ENCODE measurements at regions of chr5 and their contacts with region 1.

Region 1: GRCh38 chr5:163564321-163564938 is 59.0 kb downstream of the MAT2B start:
- DNase-seq: peak; percentile 72
- H3K4me3 ChIP-seq: no peak overlapping the region
- H3K27ac ChIP-seq: no peak overlapping the region
- H3K4me1 ChIP-seq: peaks cover 24% of the 10 kb centered on the region
- H3K27me3 ChIP-seq: peaks cover 17% of the 10 kb centered on the region; the same call in 1 of the 2 replicates

Region 2: GRCh38 chr5:162664846-162665245 is 899.6 kb before region 1 on chr5:
- in situ Hi-C with region 1: no loop called
- DNase-seq: no peak
- H3K4me3 ChIP-seq: no peak overlapping the region
- H3K27ac ChIP-seq: no peak overlapping the region
- H3K4me1 ChIP-seq: no peaks in the 10 kb centered on the region
- H3K27me3 ChIP-seq: no peaks in the 10 kb centered on the region

Region 3: GRCh38 chr5:163135849-163136248 is 428.6 kb before region 1 on chr5:
- in situ Hi-C with region 1: no loop called
- DNase-seq: no peak
- H3K4me3 ChIP-seq: no peak overlapping the region
- H3K27ac ChIP-seq: no peak overlapping the region
- H3K4me1 ChIP-seq: no peaks in the 10 kb centered on the region
- H3K27me3 ChIP-seq: no peaks in the 10 kb centered on the region

Region 4: GRCh38 chr5:163915481-163915961 is 351.1 kb after region 1 on chr5:
- in situ Hi-C with region 1: no loop called
- DNase-seq: no peak
- H3K4me3 ChIP-seq: no peak overlapping the region
- H3K27ac ChIP-seq: no peak overlapping the region
- H3K4me1 ChIP-seq: no peaks in the 10 kb centered on the region
- H3K27me3 ChIP-seq: no peaks in the 10 kb centered on the region

Region 5: GRCh38 chr5:164013077-164013670 is 448.7 kb after region 1 on chr5:
- in situ Hi-C with region 1: loop called (anchors 25 kb)
- DNase-seq: peak; percentile 64
- H3K4me3 ChIP-seq: no peak overlapping the region
- H3K27ac ChIP-seq: no peak overlapping the region
- H3K4me1 ChIP-seq: no peaks in the 10 kb centered on the region
- H3K27me3 ChIP-seq: no peaks in the 10 kb centered on the region; the same call in 1 of the 2 replicates

Region 6: DNA sequence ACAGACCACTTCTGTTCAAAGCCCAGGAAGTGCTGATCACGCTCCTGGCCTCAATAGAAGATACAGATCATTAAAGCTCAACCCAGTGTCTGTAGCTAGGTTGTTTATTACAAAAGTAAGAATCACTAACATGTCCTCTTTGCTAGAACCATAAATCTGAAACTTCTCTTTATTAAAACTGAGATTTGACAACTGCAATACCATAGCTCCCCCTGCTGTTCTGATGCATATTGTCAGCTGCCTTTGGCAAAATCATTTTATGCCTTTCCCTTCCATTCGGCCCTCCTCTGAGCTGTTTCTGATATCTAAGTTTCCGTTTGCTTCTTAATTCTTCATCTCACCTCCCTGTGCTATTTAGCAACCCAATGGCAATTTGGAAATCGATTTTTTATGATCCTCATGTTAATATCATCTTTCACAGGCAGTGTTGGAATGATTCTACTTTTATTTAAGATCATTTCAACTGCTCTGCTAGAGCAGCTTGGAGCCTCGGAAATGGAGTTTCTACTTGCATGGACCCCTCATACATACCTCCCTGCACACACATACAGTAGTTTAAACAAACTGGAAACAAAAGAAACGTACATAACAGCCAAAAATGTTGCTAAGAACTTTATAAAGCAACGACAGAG is 939.8 kb after region 1 on chr5:
- in situ Hi-C with region 1: loop called (anchors 10 kb)
- DNase-seq: peak; percentile 62
- H3K4me3 ChIP-seq: peak overlapping the region; percentile 38
- H3K27ac ChIP-seq: no peak overlapping the region
- H3K4me1 ChIP-seq: no peaks in the 10 kb centered on the region
- H3K27me3 ChIP-seq: no peaks in the 10 kb centered on the region

Region 7: GRCh38 chr5:165209086-165209727 is 1644.8 kb after region 1 on chr5:
- in situ Hi-C with region 1: loop called (anchors 25 kb)
- DNase-seq: peak; percentile 33
- H3K4me3 ChIP-seq: no peak overlapping the region
- H3K27ac ChIP-seq: no peak overlapping the region
- H3K4me1 ChIP-seq: no peaks in the 10 kb centered on the region
- H3K27me3 ChIP-seq: no peaks in the 10 kb centered on the region

Measured in GM23248 (cell line).